ENCODE measurements at regions of chr17 and their contacts with region 1.

Region 1: GRCh38 chr17:80760511-80760911 is 215.9 kb downstream of the RPTOR start:
- DNase-seq: no peak
- H3K4me3 ChIP-seq: no peak overlapping the region
- H3K27ac ChIP-seq: no peak overlapping the region
- H3K4me1 ChIP-seq: peaks cover 9% of the 10 kb centered on the region
- H3K27me3 ChIP-seq: no peaks in the 10 kb centered on the region
- CTCF ChIP-seq: no peak

Region 2: GRCh38 chr17:81044764-81045589 is 284.5 kb after region 1 on chr17:
- CTCF ChIA-PET with region 1: interaction called, 15 read pairs
- POLR2A ChIA-PET with region 1: no interaction called
- intact Hi-C with region 1: no loop called
- DNase-seq: peak; percentile 33
- H3K4me3 ChIP-seq: no peak overlapping the region
- H3K27ac ChIP-seq: no peak overlapping the region
- H3K4me1 ChIP-seq: peaks cover 26% of the 10 kb centered on the region
- H3K27me3 ChIP-seq: no peaks in the 10 kb centered on the region
- CTCF ChIP-seq: no peak

Measured in A673 (cell line).